Spleen (tissue), 13 donors: ENCODE measurements at regions of chr13 and their contacts with region 1.

Region 1: GRCh38 chr13:77565635-77566034 is 30.1 kb downstream of the SCEL start:
- DNase-seq: no peak
- H3K4me3 ChIP-seq: no peak overlapping the region
- H3K27ac ChIP-seq: no peak overlapping the region
- H3K4me1 ChIP-seq: no peaks in the 10 kb centered on the region
- H3K27me3 ChIP-seq: peaks cover 0 to 4% (median 0%) of the 10 kb centered on the region in 7 donors
- CTCF ChIP-seq: peak in 7 of 11 experiments; percentile 34 to 56 (median 51)
- POLR2A ChIP-seq: no peak

Region 2: GRCh38 chr13:77492982-77493381 is 72.7 kb before region 1 on chr13:
- intact Hi-C with region 1: loop called (anchors 10 kb)
- DNase-seq: no peak
- H3K4me3 ChIP-seq: no peak overlapping the region
- H3K27ac ChIP-seq: no peak overlapping the region
- H3K4me1 ChIP-seq: no peaks in the 10 kb centered on the region
- H3K27me3 ChIP-seq: peaks cover 0 to 6% (median 0%) of the 10 kb centered on the region in 7 donors
- CTCF ChIP-seq: peak in 8 of 11 experiments; percentile 13 to 56 (median 36)
- POLR2A ChIP-seq: no peak

Region 3: DNA sequence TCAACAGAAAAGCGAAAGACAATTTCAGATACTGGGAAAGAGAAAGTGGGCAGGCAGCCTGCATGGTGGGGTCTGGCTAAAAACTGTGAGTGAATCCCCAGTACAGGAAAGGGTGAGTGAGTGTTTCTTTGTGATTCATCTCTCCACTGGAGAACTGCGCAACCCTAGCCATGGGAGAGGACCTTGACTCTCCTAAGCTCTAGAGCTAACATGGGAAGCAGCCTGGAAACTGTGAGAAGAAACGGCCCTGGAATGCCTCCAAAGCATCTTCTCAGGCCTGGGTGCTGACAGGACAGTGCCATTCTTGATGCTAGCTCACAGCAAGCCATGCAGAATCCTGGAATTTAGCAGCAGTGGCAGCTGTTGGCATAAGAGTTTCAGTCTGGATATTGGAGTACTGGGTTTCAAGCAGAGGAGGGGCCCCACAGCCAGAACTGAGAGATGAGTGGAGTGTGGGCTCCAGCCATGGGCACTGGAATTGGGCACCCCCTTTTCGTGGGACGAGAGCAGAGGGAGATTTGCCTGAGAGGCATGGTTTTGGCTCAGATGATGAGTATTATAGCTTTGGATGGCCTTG is 113.1 kb after region 1 on chr13:
- intact Hi-C with region 1: no loop called
- DNase-seq: no peak
- H3K4me3 ChIP-seq: no peak overlapping the region
- H3K27ac ChIP-seq: no peak overlapping the region
- H3K4me1 ChIP-seq: no peaks in the 10 kb centered on the region
- H3K27me3 ChIP-seq: peaks cover 0 to 19% (median 0%) of the 10 kb centered on the region in 7 donors
- CTCF ChIP-seq: no peak
- POLR2A ChIP-seq: no peak

Region 4: DNA sequence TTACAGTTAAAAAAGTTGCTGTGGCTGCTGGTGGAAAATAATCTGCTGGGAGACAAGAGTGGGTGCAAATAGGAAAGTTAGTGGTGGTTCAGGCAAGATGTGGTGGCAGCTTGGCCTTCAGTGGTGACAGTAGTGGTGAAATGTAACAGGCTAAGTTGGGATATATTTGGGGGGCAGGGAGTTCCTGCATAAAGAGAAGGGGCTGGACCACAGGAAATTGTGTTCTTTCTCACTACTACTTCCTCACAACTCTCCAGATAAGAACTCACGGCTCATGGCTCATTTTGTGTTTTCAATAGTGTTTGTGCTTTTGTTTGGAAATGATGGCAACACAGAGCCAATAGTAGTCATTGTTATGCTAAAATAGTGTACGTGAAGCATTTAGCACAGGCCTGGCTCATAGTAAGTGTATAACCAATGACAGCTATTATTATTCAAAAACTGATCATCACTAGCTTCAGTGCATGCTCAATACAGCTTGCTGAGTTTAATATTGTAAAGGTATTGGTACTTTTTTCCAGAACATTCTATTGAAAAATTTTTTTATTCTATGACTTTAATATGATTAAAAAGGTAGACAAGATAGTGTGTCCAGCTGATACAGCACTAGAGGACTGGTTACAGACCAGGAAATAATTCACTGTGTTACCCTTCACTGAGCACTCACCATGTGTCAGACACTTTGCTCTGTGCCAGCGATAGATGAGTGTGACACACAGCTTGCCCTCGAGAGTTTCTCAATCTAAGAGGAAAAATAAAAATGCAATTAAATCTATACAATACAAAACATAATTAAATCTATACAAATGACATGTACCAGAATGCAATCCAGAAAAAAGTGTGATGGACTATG is 827.9 kb after region 1 on chr13:
- intact Hi-C with region 1: no loop called
- DNase-seq: no peak
- H3K4me3 ChIP-seq: no peak overlapping the region
- H3K27ac ChIP-seq: no peak overlapping the region
- H3K4me1 ChIP-seq: no peaks in the 10 kb centered on the region
- H3K27me3 ChIP-seq: no peaks in the 10 kb centered on the region
- CTCF ChIP-seq: no peak
- POLR2A ChIP-seq: no peak